ENCODE measurements at regions of chr2 and their contacts with region 1.

Region 1: DNA sequence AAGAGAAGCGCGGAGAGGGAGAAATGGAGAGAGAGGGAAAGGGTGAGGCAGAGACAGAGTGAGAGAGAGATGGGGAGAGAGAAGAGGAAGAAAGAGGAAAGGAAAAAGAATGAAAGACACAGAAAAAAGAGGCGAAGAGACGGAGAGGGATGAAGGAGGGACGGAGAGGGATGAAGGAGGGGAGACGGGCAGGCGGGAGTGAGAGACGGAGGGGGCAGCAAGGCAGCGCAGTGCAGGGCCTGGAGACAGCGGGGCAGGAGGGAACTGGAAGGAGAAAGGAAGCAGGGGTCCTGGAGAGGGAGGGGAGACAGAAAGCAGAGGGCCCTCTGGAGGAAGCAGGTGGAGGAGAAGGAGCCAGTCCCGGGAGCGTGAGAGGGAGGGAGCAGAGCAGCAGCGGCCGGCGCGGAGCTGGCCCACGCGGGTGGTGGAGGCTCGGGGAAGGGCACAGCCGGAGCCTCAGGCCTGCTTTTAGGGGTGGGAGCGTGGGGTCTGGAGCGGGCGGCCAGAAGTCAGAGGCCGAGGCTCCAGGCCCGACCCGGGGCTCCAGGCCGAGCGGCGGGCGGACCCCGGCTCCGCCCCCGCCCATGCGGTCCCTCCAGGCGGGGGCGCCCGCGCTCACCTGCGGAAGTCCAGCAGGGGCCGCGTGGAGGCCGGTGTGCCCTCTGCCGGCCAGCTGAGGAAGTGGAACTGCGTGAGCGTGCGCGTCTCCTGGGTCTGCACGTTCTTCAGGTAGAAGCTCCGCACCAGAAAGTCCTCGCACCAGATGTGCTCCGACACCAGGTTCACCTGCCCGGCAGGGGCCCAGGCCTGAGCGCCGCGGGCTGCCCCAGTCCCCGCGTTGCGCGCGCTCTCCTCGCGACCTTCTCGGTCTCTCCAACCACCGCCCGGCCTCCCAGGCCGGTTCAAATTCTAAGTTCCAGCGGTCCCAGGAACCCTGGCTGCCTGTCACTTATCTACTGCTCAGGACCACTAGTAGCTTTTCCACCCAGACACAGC is 14.5 kb downstream of the PTPRN start:
- DNase-seq: peak; percentile 91
- ATAC-seq: peak; percentile 87
- H3K4me3 Mint-ChIP-seq: peak overlapping the region; percentile 70
- H3K27ac Mint-ChIP-seq: peak overlapping the region; percentile 63
- H3K4me1 Mint-ChIP-seq: peaks cover 15% of the 10 kb centered on the region
- H3K27me3 Mint-ChIP-seq: peaks cover 17% of the 10 kb centered on the region

Region 2: DNA sequence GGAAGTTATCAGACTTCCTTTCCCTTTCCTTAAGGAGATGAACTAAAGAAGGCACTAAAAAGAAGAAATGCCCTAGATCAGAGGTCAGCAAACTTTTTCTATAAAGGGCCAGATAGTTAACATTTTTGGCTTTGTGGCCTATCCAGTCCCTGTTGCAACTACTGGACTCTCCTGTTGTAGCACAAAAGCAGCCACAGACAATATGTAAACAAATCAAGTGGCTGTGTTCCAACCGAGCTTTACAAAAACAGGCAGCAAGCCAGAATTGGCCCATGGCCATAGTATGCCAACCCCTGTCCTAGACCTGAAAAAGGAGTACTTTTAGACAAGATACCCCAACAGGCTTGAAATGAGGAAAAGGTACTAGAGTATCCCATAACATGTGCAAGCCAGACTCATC is 145.0 kb before region 1 on chr2:
- CTCF ChIA-PET with region 1: interaction called, 150 read pairs
- DNase-seq: no peak
- ATAC-seq: no peak
- H3K4me3 Mint-ChIP-seq: no peak overlapping the region
- H3K27ac Mint-ChIP-seq: no peak overlapping the region
- H3K4me1 Mint-ChIP-seq: no peaks in the 10 kb centered on the region
- H3K27me3 Mint-ChIP-seq: no peaks in the 10 kb centered on the region

Region 3: DNA sequence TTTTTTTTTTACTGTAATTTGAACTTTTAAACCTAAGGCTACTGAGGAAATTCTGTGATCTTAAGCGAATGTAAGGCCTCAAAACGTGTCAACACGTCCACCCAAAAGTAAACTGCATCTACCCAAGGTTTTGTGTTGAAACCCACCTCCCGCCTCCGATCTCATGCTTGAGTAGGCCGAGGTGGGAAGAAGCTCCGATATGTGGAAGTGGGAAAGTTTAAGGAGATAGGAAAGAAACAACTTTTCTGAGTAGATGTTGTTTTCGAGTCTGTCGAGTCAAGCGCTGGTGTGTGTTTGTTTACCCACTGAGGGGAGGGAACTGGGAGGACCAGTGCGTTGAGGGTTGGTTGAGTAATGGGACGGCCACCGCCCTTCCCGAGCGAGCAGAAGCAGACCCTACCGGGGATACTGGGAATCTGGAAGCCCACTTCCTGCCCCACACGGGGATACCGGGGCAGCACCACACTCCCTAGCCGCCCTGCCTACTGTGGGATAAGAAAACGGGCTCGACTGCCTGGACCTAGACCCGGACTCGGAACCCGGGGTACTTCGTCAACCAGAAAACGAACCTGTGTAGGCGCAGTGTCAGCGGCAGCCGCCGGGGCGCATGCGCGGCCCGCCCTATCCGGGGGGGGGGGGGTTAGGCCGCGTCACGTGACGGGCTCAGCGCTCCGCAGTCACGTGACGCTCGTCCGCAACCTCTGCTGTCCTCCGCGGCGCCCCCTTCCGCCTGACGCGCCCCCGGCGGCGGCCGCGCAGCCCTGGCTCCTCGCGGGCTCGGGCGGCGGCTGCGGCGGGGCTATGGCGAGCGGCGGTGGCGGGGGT is 116.9 kb before region 1 on chr2 and contains the start of gene RETREG2:
- CTCF ChIA-PET with region 1: interaction called, 34 read pairs
- DNase-seq: peak; percentile 86
- ATAC-seq: peak; percentile 54
- H3K4me3 Mint-ChIP-seq: peak within 1 kb of the TSS; percentile 79
- H3K27ac Mint-ChIP-seq: peak within 1 kb of the TSS; percentile 99
- H3K4me1 Mint-ChIP-seq: peaks cover 66% of the 10 kb centered on the region
- H3K27me3 Mint-ChIP-seq: no peaks in the 10 kb centered on the region
- total RNA-seq, gene RETREG2: 95.8 to 110 TPM

Region 4: DNA sequence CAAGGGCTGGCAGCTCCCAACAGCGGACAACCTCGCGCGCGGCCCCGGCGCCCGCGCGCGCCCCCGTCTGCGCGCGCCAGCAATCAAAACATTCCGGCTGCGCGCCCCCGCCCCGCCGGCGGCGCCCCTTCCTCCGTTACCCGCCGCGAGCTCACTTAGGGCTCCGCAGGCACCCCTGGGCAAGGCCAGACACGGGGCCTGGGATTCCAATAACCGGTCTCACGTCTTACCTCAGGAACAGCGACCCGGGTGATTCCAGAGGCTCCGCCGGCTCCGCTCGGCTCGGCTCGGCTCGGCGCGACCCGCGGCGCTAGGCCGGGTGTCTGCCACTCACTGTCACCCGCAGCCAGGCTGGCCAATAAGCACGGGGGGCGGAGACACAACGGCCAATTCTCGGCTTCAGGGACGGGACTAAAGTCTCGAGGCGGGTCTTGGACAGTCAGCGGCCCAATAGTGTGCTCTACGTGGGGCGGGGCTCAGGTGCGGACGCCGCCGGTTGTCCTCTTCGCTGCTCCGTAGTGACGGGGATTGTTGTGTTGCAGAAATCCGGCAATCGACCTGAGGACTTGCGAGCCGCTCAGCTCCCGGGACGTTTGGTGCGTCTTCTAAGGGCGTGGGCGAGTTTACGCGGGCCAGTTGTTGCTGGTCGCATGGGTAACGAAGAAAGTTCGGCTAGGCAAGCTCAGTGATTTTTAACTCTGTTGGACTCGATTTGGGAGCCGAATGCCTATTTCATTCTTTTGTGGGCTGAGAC is 65.2 kb before region 1 on chr2 and contains the starts of genes ANKZF1 and ATG9A:
- CTCF ChIA-PET with region 1: interaction called, 17 read pairs
- DNase-seq: peak; percentile 100
- ATAC-seq: peak; percentile 98
- H3K4me3 Mint-ChIP-seq: peak within 1 kb of the TSS; percentile 98
- H3K27ac Mint-ChIP-seq: peak within 1 kb of the TSS; percentile 95
- H3K4me1 Mint-ChIP-seq: peaks cover 65% of the 10 kb centered on the region
- H3K27me3 Mint-ChIP-seq: no peaks in the 10 kb centered on the region
- total RNA-seq, gene ANKZF1: 89.4 to 105 TPM
- total RNA-seq, gene ATG9A: 56.6 to 60.7 TPM

Region 5: DNA sequence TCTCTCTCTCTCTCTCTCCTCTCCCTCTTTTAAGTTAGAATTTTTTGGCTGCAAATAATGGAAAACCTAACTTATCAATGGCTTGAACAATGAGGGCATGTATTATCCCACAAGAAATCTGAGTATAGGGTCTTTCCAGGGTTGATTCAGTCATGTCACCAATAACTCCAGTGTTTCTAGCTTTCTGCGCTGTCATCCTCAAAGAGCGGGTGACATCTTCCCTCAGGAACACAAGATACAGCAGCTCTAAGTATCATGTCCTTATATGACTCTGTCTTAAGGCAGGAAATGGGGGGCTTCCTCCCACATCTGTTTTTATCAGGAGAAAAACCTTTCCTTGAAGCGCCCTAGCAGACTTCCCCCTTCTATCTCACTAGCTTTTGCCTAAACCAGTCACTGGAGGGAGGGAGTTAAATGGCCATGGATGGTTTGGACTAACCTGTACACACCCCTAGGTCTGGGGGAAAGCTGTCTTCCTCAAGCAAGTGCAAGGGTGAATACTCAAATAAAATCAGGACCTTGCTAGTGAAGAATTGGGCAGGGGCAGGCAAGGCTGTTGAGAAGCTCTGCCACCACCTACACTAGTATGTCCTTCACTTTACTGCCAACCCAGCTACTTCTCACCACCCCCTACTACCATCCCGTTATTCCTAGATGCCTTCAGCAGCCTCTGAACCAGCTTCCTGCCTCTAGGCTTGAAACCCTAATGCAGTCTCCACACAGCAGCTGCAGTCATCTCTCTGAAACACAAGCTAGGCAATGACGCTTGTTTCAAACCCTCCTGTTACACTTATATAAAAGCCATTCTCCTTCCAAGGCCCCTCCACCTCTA is 33.4 kb before region 1 on chr2:
- CTCF ChIA-PET with region 1: interaction called, 73 read pairs
- DNase-seq: no peak
- ATAC-seq: no peak
- H3K4me3 Mint-ChIP-seq: no peak overlapping the region
- H3K27ac Mint-ChIP-seq: no peak overlapping the region
- H3K4me1 Mint-ChIP-seq: no peaks in the 10 kb centered on the region
- H3K27me3 Mint-ChIP-seq: peaks cover 17% of the 10 kb centered on the region